ENCODE measurements at regions of chr16 and their contacts with region 1.

Region 1: DNA sequence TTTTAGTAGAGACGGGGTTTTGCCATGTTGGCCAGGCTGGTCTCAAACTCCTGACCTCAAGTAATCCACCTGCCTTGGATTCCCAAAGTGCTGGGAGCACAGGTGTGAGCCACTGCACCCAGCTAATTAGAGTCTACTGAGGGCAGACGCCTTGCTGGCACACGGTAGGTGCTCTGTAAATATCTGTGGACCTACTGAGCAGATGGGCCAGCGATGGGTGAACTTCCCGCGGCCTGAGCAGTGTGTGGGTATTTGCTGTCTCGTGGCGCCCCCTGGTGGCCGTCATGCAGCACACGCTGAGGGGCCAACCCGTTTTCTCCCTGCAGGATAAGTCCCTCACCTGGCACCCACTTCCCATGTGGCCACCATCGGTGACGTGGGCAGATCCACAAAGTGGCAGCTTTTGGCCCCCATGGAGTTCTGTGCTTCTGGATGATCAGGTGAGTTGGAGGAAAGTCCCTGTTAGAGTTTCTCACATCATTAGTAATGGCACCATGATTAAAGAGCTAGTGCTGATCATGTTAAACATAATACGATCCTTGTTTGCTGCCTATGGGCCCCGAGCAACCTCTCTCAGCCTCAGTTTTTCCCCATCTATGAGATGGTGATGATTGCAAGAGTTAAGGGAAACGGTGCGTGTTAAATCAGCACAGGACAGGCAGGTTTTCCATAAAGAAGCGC is 40.7 kb downstream of the ZDHHC7 start:
- DNase-seq: peak; percentile 61 to 74
- H3K4me3 ChIP-seq: no peak overlapping the region
- H3K27ac ChIP-seq: no peak overlapping the region
- H3K4me1 ChIP-seq: peaks cover 10% of the 10 kb centered on the region
- H3K27me3 ChIP-seq: no peaks in the 10 kb centered on the region
- CTCF ChIP-seq: peak; percentile 95

Region 2: GRCh38 chr16:84332975-84333684 is 637.5 kb before region 1 on chr16:
- CTCF ChIA-PET with region 1: no interaction called
- POLR2A ChIA-PET with region 1: no interaction called
- intact Hi-C with region 1: no loop called
- DNase-seq: peak in 1 of 2 experiments; percentile 29
- H3K4me3 ChIP-seq: no peak overlapping the region
- H3K27ac ChIP-seq: no peak overlapping the region
- H3K4me1 ChIP-seq: no peaks in the 10 kb centered on the region
- H3K27me3 ChIP-seq: no peaks in the 10 kb centered on the region
- CTCF ChIP-seq: no peak

Region 3: DNA sequence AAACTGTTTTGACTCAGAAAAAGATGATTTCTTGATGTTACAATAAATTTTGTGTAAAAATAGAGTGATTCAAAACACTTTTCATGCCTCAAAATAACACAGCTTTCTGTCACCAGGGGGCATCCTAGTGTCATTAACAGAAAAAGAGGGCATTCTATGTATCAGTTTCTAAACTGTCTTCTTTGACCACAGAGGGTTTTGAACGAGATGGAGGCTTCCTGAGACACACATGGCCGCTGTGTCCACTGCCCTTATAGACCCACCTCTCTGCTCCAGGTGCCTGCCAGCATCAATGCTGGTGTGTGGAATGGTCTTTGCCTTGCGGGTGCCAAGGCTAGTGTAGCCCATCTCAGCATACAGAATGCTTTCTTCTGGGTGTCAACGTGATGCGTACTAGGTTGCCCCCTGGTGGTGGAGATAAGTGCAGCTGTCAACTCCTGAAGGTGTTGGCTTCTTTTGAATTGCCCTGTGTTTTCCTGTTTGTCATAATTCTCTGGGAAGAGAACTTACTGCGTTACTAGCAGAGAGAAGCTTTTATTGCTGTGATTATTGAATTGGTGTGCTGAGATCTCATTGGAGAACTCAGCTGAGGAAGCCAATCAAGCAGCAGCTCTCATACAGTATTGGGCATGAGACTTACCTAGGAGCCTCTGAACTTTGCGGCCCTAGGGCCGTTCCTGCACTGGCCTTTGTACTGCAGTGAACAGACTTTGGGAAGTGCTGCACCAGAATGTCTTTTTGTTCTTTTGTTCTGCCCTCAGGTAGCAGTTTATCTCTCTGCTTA is 232.1 kb before region 1 on chr16:
- CTCF ChIA-PET with region 1: interaction called, 5 read pairs
- POLR2A ChIA-PET with region 1: no interaction called
- intact Hi-C with region 1: loop called (anchors 5 kb)
- DNase-seq: peak in 1 of 2 experiments; percentile 66
- H3K4me3 ChIP-seq: no peak overlapping the region
- H3K27ac ChIP-seq: 0 out of 2 replicates have a peak overlapping the region, but pooled peaks have one; percentile 18
- H3K4me1 ChIP-seq: peaks cover 48% of the 10 kb centered on the region
- H3K27me3 ChIP-seq: no peaks in the 10 kb centered on the region
- CTCF ChIP-seq: peak; percentile 89

Region 4: DNA sequence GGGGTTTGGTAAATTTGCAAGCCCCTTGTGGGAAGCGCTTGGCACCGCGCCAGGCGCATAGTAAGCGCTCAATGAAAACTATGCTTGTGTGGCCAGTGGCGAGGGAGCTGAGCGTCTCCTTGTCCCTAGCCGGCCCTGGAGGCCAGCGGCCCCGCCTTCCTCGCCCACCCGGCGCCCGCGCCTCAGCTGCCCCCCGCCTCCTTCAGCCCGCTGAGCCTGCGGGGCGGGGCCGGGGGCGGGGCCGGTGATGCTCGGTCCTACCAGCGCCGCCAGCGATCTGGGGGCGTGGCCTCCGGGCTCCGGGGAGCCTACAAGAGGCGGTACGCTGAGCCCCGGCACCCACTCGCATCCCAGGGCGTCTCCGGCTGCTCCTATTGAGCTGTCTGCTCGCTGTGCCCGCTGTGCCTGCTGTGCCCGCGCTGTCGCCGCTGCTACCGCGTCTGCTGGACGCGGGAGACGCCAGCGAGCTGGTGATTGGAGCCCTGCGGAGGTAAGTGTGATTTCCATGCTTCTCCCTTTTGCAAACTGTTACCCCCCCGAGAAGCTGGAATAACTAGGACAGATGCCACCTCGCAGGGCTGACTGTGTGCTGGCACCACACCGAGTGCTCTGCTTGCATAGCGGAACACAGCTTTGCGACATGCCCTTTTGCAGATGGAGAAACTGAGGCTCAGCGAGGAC is 150.8 kb before region 1 on chr16 and contains the start of gene CRISPLD2:
- CTCF ChIA-PET with region 1: no interaction called
- POLR2A ChIA-PET with region 1: interaction called, 10 read pairs
- intact Hi-C with region 1: no loop called
- DNase-seq: peak; percentile 85 to 94
- H3K4me3 ChIP-seq: peak within 1 kb of the TSS; percentile 59
- H3K27ac ChIP-seq: no peak within 1 kb of the TSS
- H3K4me1 ChIP-seq: peaks cover 27% of the 10 kb centered on the region
- H3K27me3 ChIP-seq: no peaks in the 10 kb centered on the region
- CTCF ChIP-seq: no peak
- total RNA-seq, gene CRISPLD2: 18.6 and 19.9 TPM in 2 replicates

Region 5: GRCh38 chr16:84995663-84996062 is 25.1 kb after region 1 on chr16:
- CTCF ChIA-PET with region 1: no interaction called
- POLR2A ChIA-PET with region 1: interaction called, 24 read pairs
- intact Hi-C with region 1: no loop called
- DNase-seq: no peak
- H3K4me3 ChIP-seq: peak overlapping the region; percentile 5; the same call in 1 of the 2 replicates
- H3K27ac ChIP-seq: peak overlapping the region; percentile 94
- H3K4me1 ChIP-seq: peaks cover 73% of the 10 kb centered on the region
- H3K27me3 ChIP-seq: no peaks in the 10 kb centered on the region
- CTCF ChIP-seq: no peak

Measured in PC-9 (cell line).